ENCODE measurements at regions of chrX and their contacts with region 1.

Region 1: DNA sequence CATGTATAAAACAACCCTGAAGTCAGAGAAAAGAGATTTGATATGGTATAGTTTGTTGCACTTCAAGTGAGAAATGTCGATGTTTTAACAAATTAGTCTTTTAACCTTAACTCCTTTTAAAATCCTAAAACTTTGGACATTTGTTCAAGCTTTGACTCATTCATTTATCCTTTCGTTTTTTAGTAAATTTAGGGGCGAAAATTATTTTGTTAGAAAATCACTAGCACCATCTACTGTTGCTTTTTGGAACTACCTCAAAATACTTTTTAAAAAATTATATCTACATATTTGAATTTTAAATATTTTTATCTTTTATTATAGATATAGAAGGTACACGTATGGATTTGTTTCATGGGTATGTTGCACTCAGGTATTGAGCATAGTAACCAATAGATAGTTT is 165.1 kb upstream of the POF1B start:
- DNase-seq: no peak
- ATAC-seq: no peak
- H3K4me3 ChIP-seq: no peak overlapping the region
- H3K4me3 Mint-ChIP-seq: no peak overlapping the region
- H3K27ac ChIP-seq: no peak overlapping the region
- H3K27ac Mint-ChIP-seq: no peak overlapping the region
- H3K4me1 ChIP-seq: no peaks in the 10 kb centered on the region
- H3K4me1 Mint-ChIP-seq: no peaks in the 10 kb centered on the region
- H3K27me3 ChIP-seq: no peaks in the 10 kb centered on the region
- H3K27me3 Mint-ChIP-seq: no peaks in the 10 kb centered on the region
- CTCF ChIP-seq: no peak

Region 2: DNA sequence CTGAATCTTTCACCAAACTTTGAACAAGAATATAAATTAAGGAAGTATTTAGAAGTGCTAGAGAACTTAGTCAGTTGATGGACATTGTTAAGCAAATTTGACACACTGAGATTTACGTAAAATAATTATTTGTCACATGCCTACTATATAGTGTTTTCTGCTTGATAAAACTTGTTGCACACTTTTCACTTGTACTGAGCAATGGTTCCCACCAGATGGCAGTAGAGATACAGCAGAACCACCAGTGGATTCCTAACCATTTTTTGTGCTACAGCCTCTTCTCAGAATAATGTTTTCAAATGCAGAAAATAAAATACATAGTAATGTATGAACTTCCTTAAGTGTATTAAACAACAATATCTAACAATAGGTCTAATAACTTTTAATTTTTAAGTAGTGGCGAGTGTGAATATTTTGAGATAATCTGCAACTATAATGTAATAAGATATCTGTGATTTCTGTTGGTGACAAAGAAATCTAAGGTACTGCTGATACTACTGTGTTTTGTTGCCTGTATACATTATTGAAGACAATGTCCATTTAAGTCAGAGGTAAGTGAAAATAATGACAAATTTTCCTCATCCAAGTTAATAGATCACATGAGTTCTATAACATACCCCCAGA is 459.7 kb before region 1 on chrX:
- CTCF ChIA-PET with region 1: no interaction called
- POLR2A ChIA-PET with region 1: no interaction called
- intact Hi-C with region 1: loop called in 1 of 2 experiments (anchors 10 kb)
- DNase-seq: peak in 5 of 14 experiments; percentile 3 to 39 (median 28)
- ATAC-seq: no peak
- H3K4me3 ChIP-seq: no peak overlapping the region
- H3K4me3 Mint-ChIP-seq: no peak overlapping the region
- H3K27ac ChIP-seq: no peak overlapping the region
- H3K27ac Mint-ChIP-seq: no peak overlapping the region
- H3K4me1 ChIP-seq: no peaks in the 10 kb centered on the region
- H3K4me1 Mint-ChIP-seq: no peaks in the 10 kb centered on the region
- H3K27me3 ChIP-seq: no peaks in the 10 kb centered on the region
- H3K27me3 Mint-ChIP-seq: no peaks in the 10 kb centered on the region
- CTCF ChIP-seq: peak; percentile 64

Region 3: DNA sequence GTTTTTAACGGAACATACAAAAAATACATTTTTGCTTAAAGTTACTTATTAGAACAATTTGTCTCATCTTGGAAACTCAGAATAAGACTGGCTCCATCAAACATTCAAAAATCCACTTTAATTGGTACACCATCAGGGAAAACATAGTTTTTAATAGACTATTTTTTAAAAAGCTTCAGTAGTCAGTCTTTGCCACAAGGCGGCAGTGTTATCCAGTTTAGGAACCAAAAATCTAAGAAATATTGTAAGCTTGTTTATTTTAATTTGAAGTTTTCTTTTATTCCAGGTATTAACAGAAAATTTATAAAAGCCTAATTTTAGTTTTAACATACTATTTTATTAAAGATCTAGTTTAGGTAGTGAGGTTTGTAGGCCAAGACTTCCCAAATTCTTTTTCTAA is 433.3 kb before region 1 on chrX:
- CTCF ChIA-PET with region 1: no interaction called
- POLR2A ChIA-PET with region 1: no interaction called
- intact Hi-C with region 1: loop called in 1 of 2 experiments (anchors 10 kb)
- DNase-seq: peak in 2 of 14 experiments; percentile 3 to 6
- ATAC-seq: no peak
- H3K4me3 ChIP-seq: no peak overlapping the region
- H3K4me3 Mint-ChIP-seq: no peak overlapping the region
- H3K27ac ChIP-seq: no peak overlapping the region
- H3K27ac Mint-ChIP-seq: no peak overlapping the region
- H3K4me1 ChIP-seq: no peaks in the 10 kb centered on the region
- H3K4me1 Mint-ChIP-seq: no peaks in the 10 kb centered on the region
- H3K27me3 ChIP-seq: no peaks in the 10 kb centered on the region
- H3K27me3 Mint-ChIP-seq: no peaks in the 10 kb centered on the region
- CTCF ChIP-seq: peak; percentile 51

Measured in CD4-positive, alpha-beta T cell (primary cell).